ENCODE measurements at regions of chr12 and their contacts with region 1.

Region 1: DNA sequence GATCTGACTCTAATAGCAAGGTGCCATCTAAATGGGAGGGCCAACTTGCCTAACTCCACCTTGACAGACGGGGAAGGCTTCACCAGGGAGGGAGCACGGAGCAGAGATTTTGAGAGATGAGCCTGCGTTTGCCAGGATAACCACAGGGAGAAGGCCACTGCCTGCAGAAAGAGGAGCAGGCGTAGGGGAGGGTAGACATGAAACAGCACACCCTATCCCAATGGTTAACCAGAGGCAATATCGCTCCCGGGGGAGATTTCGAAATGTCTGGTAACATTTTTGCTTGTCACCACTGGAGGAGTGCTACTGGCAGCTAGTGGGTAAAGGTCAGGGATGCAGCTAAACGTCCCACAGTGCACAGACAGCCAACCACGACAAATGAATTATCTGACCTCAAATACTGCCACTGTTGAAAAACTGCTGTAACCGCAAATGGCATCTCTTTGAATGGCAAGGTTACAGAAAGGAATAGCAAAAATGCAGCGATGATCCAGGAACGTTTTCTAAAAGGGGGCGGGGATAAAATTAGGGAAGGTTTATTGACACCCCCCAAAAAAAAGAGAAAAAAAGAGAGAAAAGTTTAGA is 126.0 kb upstream of the ATF7IP start:
- DNase-seq: peak; percentile 44 to 83 (median 72)
- H3K4me3 ChIP-seq: peak overlapping the region in 1 of 4 donors; percentile 32
- H3K27ac ChIP-seq: peak overlapping the region in 3 of 5 donors; percentile 24 to 53 (median 49)
- H3K4me1 ChIP-seq: peaks cover 0 to 16% of the 10 kb centered on the region in 2 donors
- H3K27me3 ChIP-seq: no peaks in the 10 kb centered on the region
- CTCF ChIP-seq: peak in 3 of 6 experiments; percentile 26 to 46 (median 44)
- POLR2A ChIP-seq: no peak

Region 2: DNA sequence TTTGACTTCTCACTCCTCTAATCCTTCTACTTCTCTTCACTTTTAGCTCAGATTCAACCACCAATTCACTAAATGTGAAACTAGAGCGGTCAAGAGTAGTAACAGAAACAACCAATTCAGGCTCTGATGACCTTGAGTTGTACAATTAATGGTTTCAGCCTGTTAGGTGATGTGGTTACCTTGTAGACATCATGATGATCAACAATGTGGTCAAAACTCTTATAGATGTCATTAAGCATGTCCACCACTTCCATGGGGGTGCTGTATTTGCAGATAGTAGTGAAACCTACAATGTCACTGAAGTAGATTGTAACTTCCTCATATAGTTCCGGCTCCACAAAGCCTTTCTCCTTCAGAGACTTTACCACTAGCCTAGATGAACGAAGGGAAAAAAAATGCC is 382.4 kb after region 1 on chr12:
- intact Hi-C with region 1: loop called in 1 of 2 experiments (anchors 5 kb)
- DNase-seq: no peak
- H3K4me3 ChIP-seq: no peak overlapping the region
- H3K27ac ChIP-seq: no peak overlapping the region
- H3K4me1 ChIP-seq: no peaks in the 10 kb centered on the region
- H3K27me3 ChIP-seq: no peaks in the 10 kb centered on the region
- CTCF ChIP-seq: no peak
- POLR2A ChIP-seq: no peak